Mammary epithelial cell (primary cell): ENCODE measurements at regions of chr19 and their contacts with region 1.

Region 1: GRCh38 chr19:46221981-46222610 is 7.4 kb upstream of the IGFL1 start:
- DNase-seq: peak; percentile 90
- H3K4me3 ChIP-seq: no peak overlapping the region
- H3K27ac ChIP-seq: no peak overlapping the region
- H3K4me1 ChIP-seq: peaks cover 51% of the 10 kb centered on the region
- H3K27me3 ChIP-seq: no peaks in the 10 kb centered on the region
- CTCF ChIP-seq: no peak

Region 2: GRCh38 chr19:45947926-45948325 is 274.2 kb before region 1 on chr19:
- CTCF ChIA-PET with region 1: no interaction called
- dilution Hi-C with region 1: loop called (anchors 10 kb)
- in situ Hi-C with region 1: no loop called
- intact Hi-C with region 1: no loop called
- DNase-seq: peak; percentile 60
- H3K4me3 ChIP-seq: no peak overlapping the region
- H3K27ac ChIP-seq: no peak overlapping the region
- H3K4me1 ChIP-seq: peaks cover 4% of the 10 kb centered on the region
- H3K27me3 ChIP-seq: no peaks in the 10 kb centered on the region
- CTCF ChIP-seq: no peak

Region 3: GRCh38 chr19:46016426-46017094 is 205.5 kb before region 1 on chr19:
- CTCF ChIA-PET with region 1: interaction called, 10 read pairs
- dilution Hi-C with region 1: no loop called
- in situ Hi-C with region 1: no loop called
- intact Hi-C with region 1: no loop called
- DNase-seq: peak; percentile 76
- H3K4me3 ChIP-seq: peak overlapping the region; percentile 31 to 59 (median 56)
- H3K27ac ChIP-seq: no peak overlapping the region
- H3K4me1 ChIP-seq: peaks cover 37% of the 10 kb centered on the region
- H3K27me3 ChIP-seq: no peaks in the 10 kb centered on the region
- CTCF ChIP-seq: peak; percentile 68 to 79

Region 4: GRCh38 chr19:46186101-46187100 is 35.7 kb before region 1 on chr19:
- CTCF ChIA-PET with region 1: no interaction called
- dilution Hi-C with region 1: no loop called
- in situ Hi-C with region 1: no loop called
- intact Hi-C with region 1: loop called (anchors 5 kb)
- DNase-seq: no peak
- H3K4me3 ChIP-seq: no peak overlapping the region
- H3K27ac ChIP-seq: peak overlapping the region; percentile 95
- H3K4me1 ChIP-seq: peaks cover 18% of the 10 kb centered on the region
- H3K27me3 ChIP-seq: no peaks in the 10 kb centered on the region
- CTCF ChIP-seq: no peak

Region 5: GRCh38 chr19:46198761-46199160 is 23.3 kb before region 1 on chr19:
- CTCF ChIA-PET with region 1: no interaction called
- dilution Hi-C with region 1: no loop called
- in situ Hi-C with region 1: no loop called
- intact Hi-C with region 1: loop called (anchors 2 kb)
- DNase-seq: peak; percentile 86
- H3K4me3 ChIP-seq: no peak overlapping the region
- H3K27ac ChIP-seq: peak overlapping the region; percentile 81
- H3K4me1 ChIP-seq: peaks cover 75% of the 10 kb centered on the region
- H3K27me3 ChIP-seq: no peaks in the 10 kb centered on the region
- CTCF ChIP-seq: no peak

Region 6: DNA sequence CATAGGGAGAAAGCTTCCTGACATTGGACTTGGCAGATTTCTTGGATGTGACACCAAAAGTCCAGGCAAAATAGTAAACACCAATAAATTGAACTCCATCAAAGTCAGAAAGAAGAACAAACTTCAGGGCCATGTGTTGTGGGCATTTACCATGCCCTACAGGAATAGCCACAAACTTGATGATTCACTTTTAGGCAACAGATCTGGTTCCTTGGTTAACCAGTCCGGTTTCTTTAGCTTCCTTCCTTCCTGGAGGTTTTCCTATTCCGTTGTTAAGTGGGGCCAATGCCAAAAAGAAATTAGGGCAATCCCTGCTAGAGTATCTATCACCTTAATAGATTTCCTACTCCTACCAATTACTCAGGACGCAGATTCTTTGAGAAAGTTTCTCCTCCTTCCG is 32.7 kb after region 1 on chr19:
- CTCF ChIA-PET with region 1: no interaction called
- dilution Hi-C with region 1: no loop called
- in situ Hi-C with region 1: no loop called
- intact Hi-C with region 1: no loop called
- DNase-seq: peak; percentile 73
- H3K4me3 ChIP-seq: no peak overlapping the region
- H3K27ac ChIP-seq: no peak overlapping the region
- H3K4me1 ChIP-seq: no peaks in the 10 kb centered on the region
- H3K27me3 ChIP-seq: peaks cover 8% of the 10 kb centered on the region
- CTCF ChIP-seq: no peak

Region 7: DNA sequence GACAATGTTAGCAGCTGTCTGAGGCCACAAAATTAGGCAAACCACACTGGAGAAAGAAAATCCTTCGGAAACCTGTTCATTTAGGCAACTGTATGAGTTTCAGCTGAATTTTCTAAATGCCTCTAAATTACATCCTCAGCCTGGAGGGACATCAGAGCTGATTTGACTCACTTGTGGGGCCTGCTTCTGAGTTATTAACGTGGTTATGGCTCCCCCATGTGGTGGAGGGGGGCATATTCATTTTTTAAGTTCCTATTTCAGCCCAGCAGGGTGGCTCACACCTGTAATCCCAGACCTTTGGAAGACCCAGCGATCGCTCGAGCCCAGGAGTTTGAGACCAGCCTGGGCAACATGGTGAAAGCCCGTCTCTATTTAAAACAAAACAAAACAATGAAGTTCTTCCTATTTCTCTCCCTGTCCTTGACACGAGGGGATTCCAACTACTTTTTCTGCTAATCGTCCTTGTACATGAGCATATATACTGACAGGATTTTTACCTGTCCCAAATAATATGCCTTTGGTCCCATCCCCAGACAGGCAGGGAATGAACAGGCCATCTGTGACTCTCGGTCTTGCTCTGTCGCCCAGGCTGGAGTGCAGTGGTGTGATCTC is 43.2 kb after region 1 on chr19:
- CTCF ChIA-PET with region 1: interaction called, 4 read pairs
- dilution Hi-C with region 1: no loop called
- in situ Hi-C with region 1: no loop called
- intact Hi-C with region 1: loop called (anchors 2 kb)
- DNase-seq: peak; percentile 70
- H3K4me3 ChIP-seq: no peak overlapping the region
- H3K27ac ChIP-seq: no peak overlapping the region
- H3K4me1 ChIP-seq: peaks cover 10% of the 10 kb centered on the region
- H3K27me3 ChIP-seq: peaks cover 4% of the 10 kb centered on the region
- CTCF ChIP-seq: peak; percentile 80 to 84

Region 8: DNA sequence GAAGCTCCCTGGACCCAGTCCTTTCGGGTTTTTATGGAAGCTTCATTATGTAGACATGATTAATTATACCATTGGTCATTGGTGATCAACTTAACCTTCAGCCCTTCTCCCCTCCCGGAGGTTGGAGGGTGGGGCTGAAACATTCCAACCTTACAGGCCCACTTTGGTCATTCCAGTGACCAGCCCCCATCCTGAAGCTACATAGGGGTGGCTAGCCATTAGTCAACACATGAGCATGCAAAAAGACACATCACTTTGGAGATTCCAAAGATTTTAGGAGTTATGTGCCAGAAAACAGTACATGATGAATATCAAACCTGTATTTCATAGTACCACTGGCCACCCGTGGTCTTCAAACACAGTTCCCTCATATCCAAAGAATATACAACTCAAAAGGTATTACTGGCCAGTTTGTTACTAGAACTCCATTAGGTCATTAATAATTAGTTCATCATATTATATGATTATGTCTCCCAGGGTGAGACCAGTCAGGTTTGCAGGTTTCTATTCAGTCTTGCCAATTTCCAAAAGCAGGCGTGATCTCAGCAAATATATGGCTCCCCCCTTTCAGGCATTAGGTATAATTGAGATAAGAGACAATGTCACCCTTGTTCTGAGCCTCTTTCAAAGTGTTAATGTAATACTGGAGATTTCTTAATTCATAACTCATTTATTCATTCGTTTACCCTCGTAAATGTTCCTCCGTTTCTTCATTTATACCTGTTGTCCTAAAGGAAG is 135.9 kb after region 1 on chr19:
- CTCF ChIA-PET with region 1: no interaction called
- dilution Hi-C with region 1: no loop called
- in situ Hi-C with region 1: no loop called
- intact Hi-C with region 1: no loop called
- DNase-seq: no peak
- H3K4me3 ChIP-seq: no peak overlapping the region
- H3K27ac ChIP-seq: no peak overlapping the region
- H3K4me1 ChIP-seq: no peaks in the 10 kb centered on the region
- H3K27me3 ChIP-seq: no peaks in the 10 kb centered on the region
- CTCF ChIP-seq: no peak

Region 9: DNA sequence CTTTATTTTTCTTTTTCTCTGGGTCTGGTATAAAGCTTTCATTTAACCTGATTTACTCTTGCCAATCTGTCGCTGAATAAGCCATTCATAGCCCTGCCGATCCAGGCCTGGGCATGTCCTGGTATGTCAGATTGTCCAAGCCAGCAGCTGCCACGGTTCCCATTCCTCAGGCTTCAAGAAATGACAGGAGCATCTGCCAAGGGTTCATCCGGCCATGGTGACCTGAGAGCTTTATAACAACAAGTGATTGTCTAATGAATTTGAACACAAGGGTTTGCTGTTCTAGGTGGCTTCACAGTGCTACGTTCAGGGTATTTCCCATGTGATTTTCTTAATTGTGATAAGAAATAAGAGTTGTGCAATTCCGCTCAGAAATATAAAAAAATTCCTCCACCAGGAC is 229.3 kb after region 1 on chr19:
- CTCF ChIA-PET with region 1: no interaction called
- dilution Hi-C with region 1: no loop called
- in situ Hi-C with region 1: no loop called
- intact Hi-C with region 1: no loop called
- DNase-seq: peak; percentile 90
- H3K4me3 ChIP-seq: no peak overlapping the region
- H3K27ac ChIP-seq: peak overlapping the region; percentile 79
- H3K4me1 ChIP-seq: peaks cover 35% of the 10 kb centered on the region
- H3K27me3 ChIP-seq: no peaks in the 10 kb centered on the region
- CTCF ChIP-seq: no peak

Region 10: GRCh38 chr19:46513461-46514236 is 291.6 kb after region 1 on chr19:
- CTCF ChIA-PET with region 1: no interaction called
- dilution Hi-C with region 1: no loop called
- in situ Hi-C with region 1: no loop called
- intact Hi-C with region 1: no loop called
- DNase-seq: peak; percentile 57
- H3K4me3 ChIP-seq: no peak overlapping the region
- H3K27ac ChIP-seq: no peak overlapping the region
- H3K4me1 ChIP-seq: peaks cover 5% of the 10 kb centered on the region
- H3K27me3 ChIP-seq: no peaks in the 10 kb centered on the region
- CTCF ChIP-seq: peak; percentile 68 to 97